Posterior vena cava (tissue), 2 donors: ENCODE measurements at regions of chr7 and their contacts with region 1.

Region 1: DNA sequence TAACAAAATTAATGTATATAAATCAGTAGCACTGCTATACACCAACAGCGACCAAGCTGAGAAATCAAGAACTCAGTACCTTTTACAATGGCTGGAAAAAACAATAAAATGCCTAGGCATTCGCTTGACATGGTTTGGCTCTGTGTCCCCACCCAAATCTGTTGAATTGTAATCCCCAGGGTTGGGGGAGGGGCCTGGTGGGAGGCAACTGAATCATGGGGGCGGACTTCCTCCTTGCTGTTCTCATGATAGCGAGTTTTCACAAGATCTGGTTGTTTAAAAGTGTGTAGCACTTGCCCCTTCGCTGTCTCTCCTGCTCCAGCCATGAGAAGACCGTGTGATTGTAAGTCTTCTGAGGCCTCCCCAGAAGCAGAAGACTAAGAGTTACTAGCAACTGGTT is 8.6 kb downstream of the ZNF786 start:
- DNase-seq: no peak

Region 2: DNA sequence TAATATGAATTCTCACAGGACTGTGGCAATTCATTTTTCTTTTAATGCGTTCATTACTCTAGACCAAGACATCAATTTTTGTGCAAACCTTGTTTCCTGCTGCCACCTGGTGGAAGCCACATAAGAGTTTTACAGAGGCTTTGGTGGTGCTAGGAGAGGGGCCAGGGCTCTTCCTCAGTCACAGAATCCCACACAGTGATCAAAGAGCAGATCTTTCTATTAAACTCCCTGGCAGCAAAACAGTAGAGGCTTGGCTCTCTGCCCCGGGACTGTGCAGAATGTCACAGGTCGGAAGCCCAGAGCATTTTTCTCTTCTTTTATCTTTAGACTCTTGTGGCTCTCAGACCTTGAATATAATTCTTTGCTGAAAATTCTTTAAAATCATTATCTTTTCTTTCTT is 997.8 kb before region 1 on chr7:
- intact Hi-C with region 1: loop called in 1 of 2 experiments (anchors 10 kb)
- DNase-seq: no peak

Region 3: DNA sequence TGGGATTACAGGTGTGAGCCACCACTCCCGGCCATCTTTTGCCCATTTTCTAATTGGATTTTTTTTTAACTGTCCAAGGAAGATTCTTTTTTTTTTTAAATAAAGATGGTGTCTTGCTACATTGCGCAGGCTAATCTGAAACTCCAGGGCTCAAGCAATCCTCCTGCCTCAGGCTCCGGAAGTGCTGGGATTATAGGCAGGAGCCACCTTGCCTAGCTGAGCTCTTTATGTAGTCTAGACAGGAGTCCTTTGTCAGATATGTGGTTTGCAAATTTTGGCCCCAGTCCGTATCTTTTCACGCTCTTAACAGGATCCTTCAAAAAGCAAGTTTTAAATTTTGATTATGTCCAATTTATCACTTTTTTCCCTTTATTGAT is 40.3 kb after region 1 on chr7:
- intact Hi-C with region 1: no loop called
- DNase-seq: no peak

Region 4: GRCh38 chr7:149552799-149553198 is 470.9 kb after region 1 on chr7:
- intact Hi-C with region 1: no loop called
- DNase-seq: no peak